Endothelial cell of umbilical vein (primary cell): ENCODE measurements at regions of chr3 and their contacts with region 1.

Region 1: GRCh38 chr3:39639344-39640236 is 169.8 kb upstream of the MYRIP start:
- DNase-seq: peak; percentile 95
- H3K4me3 ChIP-seq: peak overlapping the region in 1 of 3 experiments; percentile 21
- H3K27ac ChIP-seq: peak overlapping the region; percentile 97
- H3K4me1 ChIP-seq: peaks cover 32% of the 10 kb centered on the region
- H3K27me3 ChIP-seq: no peaks in the 10 kb centered on the region
- CTCF ChIP-seq: no peak
- POLR2A ChIP-seq: no peak

Region 2: DNA sequence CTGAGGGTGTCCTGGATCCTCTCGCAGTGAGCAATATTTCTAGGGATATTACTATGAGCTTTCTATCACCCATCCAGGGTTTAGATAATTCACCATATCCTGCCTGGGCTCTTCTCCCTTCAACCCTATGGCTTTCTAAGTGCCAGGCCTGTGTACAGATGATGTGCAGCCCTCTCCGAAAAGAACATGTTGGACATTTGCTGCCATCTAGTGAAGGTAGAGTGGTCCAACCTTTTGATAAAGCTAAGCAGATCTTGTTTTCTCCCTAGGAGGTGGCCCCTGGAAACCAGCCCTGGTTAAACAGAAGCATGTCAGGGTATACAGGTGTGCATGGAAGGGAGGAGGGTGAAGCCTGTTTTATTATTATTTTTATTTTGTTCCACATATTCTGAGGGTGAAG is 795.7 kb before region 1 on chr3:
- CTCF ChIA-PET with region 1: no interaction called
- POLR2A ChIA-PET with region 1: no interaction called
- dilution Hi-C with region 1: no loop called
- intact Hi-C with region 1: no loop called
- DNase-seq: peak; percentile 71
- H3K4me3 ChIP-seq: no peak overlapping the region
- H3K27ac ChIP-seq: no peak overlapping the region
- H3K4me1 ChIP-seq: no peaks in the 10 kb centered on the region
- H3K27me3 ChIP-seq: peaks cover 0 to 5% of the 10 kb centered on the region in 2 experiments
- CTCF ChIP-seq: peak; percentile 52 to 56
- POLR2A ChIP-seq: no peak

Region 3: DNA sequence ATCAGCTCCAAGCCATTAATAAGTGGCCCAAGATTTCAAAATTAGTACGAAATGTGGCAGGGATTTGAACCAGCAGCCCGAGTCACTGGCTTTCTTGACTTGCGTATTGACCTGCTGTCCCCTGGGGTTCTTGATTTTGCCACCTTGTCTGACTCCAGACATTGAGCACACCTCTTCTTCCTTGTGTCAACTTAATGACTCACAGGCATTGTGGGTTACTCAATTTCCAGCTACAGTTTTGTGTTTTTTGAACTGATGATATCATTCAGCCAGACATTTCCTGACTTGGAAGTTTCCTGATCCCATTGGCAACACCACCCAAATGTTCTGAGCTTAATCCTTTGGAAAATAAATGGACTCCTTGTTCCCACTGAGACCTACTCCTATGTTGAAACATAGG is 107.9 kb before region 1 on chr3:
- CTCF ChIA-PET with region 1: interaction called, 5 read pairs
- POLR2A ChIA-PET with region 1: interaction called, 3 read pairs
- dilution Hi-C with region 1: no loop called
- intact Hi-C with region 1: loop called (anchors 1 kb)
- DNase-seq: peak; percentile 98
- H3K4me3 ChIP-seq: no peak overlapping the region
- H3K27ac ChIP-seq: peak overlapping the region; percentile 84
- H3K4me1 ChIP-seq: peaks cover 27% of the 10 kb centered on the region
- H3K27me3 ChIP-seq: no peaks in the 10 kb centered on the region
- CTCF ChIP-seq: no peak
- POLR2A ChIP-seq: peak; percentile 43

Region 4: GRCh38 chr3:39627363-39627762 is 12.2 kb before region 1 on chr3:
- CTCF ChIA-PET with region 1: interaction called, 13 read pairs
- POLR2A ChIA-PET with region 1: no interaction called
- dilution Hi-C with region 1: no loop called
- intact Hi-C with region 1: no loop called
- DNase-seq: no peak
- H3K4me3 ChIP-seq: no peak overlapping the region
- H3K27ac ChIP-seq: no peak overlapping the region
- H3K4me1 ChIP-seq: no peaks in the 10 kb centered on the region
- H3K27me3 ChIP-seq: no peaks in the 10 kb centered on the region
- CTCF ChIP-seq: no peak
- POLR2A ChIP-seq: no peak

Region 5: GRCh38 chr3:39748002-39748401 is 108.4 kb after region 1 on chr3:
- CTCF ChIA-PET with region 1: interaction called, 7 read pairs
- POLR2A ChIA-PET with region 1: interaction called, 3 read pairs
- dilution Hi-C with region 1: no loop called
- intact Hi-C with region 1: loop called (anchors 1 kb)
- DNase-seq: peak; percentile 78
- H3K4me3 ChIP-seq: no peak overlapping the region
- H3K27ac ChIP-seq: peak overlapping the region; percentile 87
- H3K4me1 ChIP-seq: peaks cover 53% of the 10 kb centered on the region
- H3K27me3 ChIP-seq: no peaks in the 10 kb centered on the region
- CTCF ChIP-seq: no peak
- POLR2A ChIP-seq: no peak

Region 6: GRCh38 chr3:39900571-39900970 is 261.0 kb after region 1 on chr3:
- CTCF ChIA-PET with region 1: no interaction called
- POLR2A ChIA-PET with region 1: no interaction called
- dilution Hi-C with region 1: no loop called
- intact Hi-C with region 1: loop called (anchors 1 kb)
- DNase-seq: no peak
- H3K4me3 ChIP-seq: no peak overlapping the region
- H3K27ac ChIP-seq: no peak overlapping the region
- H3K4me1 ChIP-seq: peaks cover 5% of the 10 kb centered on the region
- H3K27me3 ChIP-seq: no peaks in the 10 kb centered on the region
- CTCF ChIP-seq: no peak
- POLR2A ChIP-seq: no peak

Region 7: GRCh38 chr3:40179016-40179415 is 539.4 kb after region 1 on chr3:
- CTCF ChIA-PET with region 1: interaction called, 12 read pairs
- POLR2A ChIA-PET with region 1: no interaction called
- dilution Hi-C with region 1: no loop called
- intact Hi-C with region 1: loop called (anchors 1 kb)
- DNase-seq: peak; percentile 80
- H3K4me3 ChIP-seq: no peak overlapping the region
- H3K27ac ChIP-seq: no peak overlapping the region
- H3K4me1 ChIP-seq: no peaks in the 10 kb centered on the region
- H3K27me3 ChIP-seq: no peaks in the 10 kb centered on the region
- CTCF ChIP-seq: peak; percentile 68 to 69
- POLR2A ChIP-seq: no peak